GM12878 (cell line): ENCODE measurements at regions of chr3 and their contacts with region 1.

Region 1: GRCh38 chr3:112734718-112735350 is 93.9 kb upstream of the CCDC80 start:
- DNase-seq: peak; percentile 40
- ATAC-seq: peak; percentile 94
- H3K4me3 ChIP-seq: no peak overlapping the region
- H3K27ac ChIP-seq: no peak overlapping the region
- H3K4me1 ChIP-seq: no peaks in the 10 kb centered on the region
- H3K27me3 ChIP-seq: no peaks in the 10 kb centered on the region; a peak in 1 of 4 replicates
- CTCF ChIP-seq: peak; percentile 71 to 84 (median 71)
- EP300 ChIP-seq: no peak
- POLR2A ChIP-seq: no peak
- RAD21 ChIP-seq: peak; percentile 91

Region 2: DNA sequence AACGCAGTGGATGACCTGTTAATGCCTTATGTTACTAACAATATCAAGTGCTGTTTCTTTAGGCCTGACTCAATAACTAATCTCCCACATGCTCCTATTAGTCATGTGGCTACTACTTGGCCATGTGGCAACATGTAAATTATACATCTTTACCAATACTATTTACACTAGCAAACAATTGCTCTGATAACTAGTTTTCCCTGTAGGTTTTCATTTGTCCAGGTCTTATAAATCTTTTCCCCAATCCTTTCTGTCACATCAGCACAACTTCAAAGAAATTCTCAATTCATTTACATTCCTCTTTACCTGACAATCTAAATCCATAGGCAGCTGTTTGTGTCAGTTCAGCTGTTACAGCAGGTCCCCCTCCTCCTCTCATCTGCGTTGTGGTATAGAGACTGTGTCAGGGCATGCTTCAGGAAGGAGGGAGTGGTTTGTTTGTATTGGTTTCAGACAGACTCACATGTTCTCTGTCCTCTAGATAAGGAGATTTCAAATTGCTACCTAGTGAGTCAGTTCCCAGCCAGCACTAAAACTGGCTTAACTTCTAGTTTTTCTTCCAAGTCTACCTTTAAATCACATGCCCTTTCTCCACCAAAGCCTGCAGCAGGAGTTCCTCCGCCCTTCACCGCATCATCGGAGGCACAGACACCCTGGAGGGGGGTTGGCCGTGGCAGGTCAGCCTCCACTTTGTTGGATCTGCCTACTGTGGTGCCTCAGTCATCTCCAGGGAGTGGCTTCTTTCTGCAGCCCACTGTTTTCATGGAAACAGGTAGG is 659.9 kb before region 1 on chr3:
- CTCF ChIA-PET with region 1: no interaction called
- POLR2A ChIA-PET with region 1: no interaction called
- RAD21 ChIA-PET with region 1: no interaction called
- SMC1A ChIA-PET with region 1: no interaction called
- in situ Hi-C with region 1: no loop called
- intact Hi-C with region 1: no loop called
- DNase-seq: no peak
- ATAC-seq: peak; percentile 70
- H3K4me3 ChIP-seq: no peak overlapping the region
- H3K27ac ChIP-seq: no peak overlapping the region
- H3K4me1 ChIP-seq: peaks cover 4% of the 10 kb centered on the region; the same call in 1 of the 2 replicates
- H3K27me3 ChIP-seq: no peaks in the 10 kb centered on the region
- CTCF ChIP-seq: no peak
- EP300 ChIP-seq: no peak
- POLR2A ChIP-seq: no peak
- RAD21 ChIP-seq: no peak

Region 3: DNA sequence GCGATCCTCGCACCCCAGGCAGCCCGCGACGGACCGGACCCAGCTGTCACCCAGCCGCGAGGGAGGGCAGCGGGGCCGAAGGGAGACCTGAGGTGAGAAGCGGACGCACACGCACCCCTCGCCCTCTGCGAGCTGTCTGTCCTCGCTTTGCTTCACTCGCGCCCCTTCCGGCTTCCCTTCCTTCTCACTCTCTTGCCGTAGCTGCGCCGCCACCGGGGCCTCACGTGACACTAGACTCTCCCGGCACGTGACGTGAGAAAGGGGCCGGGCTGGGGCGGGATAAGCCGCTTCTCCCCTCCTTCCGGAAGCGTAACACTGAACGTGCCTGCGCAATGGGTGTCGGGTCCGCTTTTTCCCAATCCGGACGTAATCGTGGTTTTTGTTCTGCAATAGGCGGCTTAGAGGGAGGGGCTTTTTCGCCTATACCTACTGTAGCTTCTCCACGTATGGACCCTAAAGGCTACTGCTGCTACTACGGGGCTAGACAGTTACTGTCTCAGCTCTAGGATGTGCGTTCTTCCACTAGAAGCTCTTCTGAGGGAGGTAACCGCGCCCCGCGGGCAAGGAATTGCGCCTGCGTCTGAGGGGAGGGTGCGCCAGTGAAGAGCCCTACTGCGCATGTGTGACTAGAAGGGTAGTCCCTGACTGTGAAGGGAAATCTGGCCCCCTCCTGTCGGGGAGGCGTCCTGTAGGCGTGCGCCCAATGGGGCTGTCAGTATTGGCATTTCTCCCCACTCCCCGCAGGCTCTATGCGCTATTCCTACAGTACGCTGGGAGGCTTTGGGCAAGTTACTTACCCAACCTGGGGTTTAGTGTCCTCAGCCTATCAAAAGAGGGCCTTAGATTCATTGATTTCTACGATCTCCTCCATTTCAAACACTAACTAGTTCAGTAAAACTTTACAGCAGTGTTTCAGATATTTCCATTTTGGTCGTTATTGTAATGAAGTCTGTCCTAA is 172.8 kb before region 1 on chr3 and contains the starts of genes ATG3 and SLC35A5:
- CTCF ChIA-PET with region 1: no interaction called
- POLR2A ChIA-PET with region 1: no interaction called
- RAD21 ChIA-PET with region 1: no interaction called
- SMC1A ChIA-PET with region 1: no interaction called
- in situ Hi-C with region 1: no loop called
- intact Hi-C with region 1: no loop called
- DNase-seq: peak; percentile 96
- ATAC-seq: peak; percentile 88
- H3K4me3 ChIP-seq: peak within 1 kb of the TSS; percentile 81
- H3K27ac ChIP-seq: peak within 1 kb of the TSS; percentile 92
- H3K4me1 ChIP-seq: peaks cover 4% of the 10 kb centered on the region; the same call in 1 of the 2 replicates
- H3K27me3 ChIP-seq: no peaks in the 10 kb centered on the region
- CTCF ChIP-seq: 0 out of 6 replicates have a peak, but pooled peaks of 2 of the 3 experiments have one; percentile 0 to 9
- EP300 ChIP-seq: peak; percentile 42 to 57; a peak in 1 of 4 replicates
- POLR2A ChIP-seq: peak; percentile 89
- RAD21 ChIP-seq: no peak
- polyA plus RNA-seq, gene ATG3: 49.8 to 71.2 TPM
- polyA plus RNA-seq, gene SLC35A5: 10.9 to 15.7 TPM

Region 4: GRCh38 chr3:112642912-112643506 is 91.8 kb before region 1 on chr3:
- CTCF ChIA-PET with region 1: interaction called, 33 read pairs
- POLR2A ChIA-PET with region 1: no interaction called
- RAD21 ChIA-PET with region 1: interaction called, 33 read pairs
- SMC1A ChIA-PET with region 1: interaction called, 55 read pairs
- in situ Hi-C with region 1: no loop called
- intact Hi-C with region 1: loop called (anchors 2 kb)
- DNase-seq: peak; percentile 46
- ATAC-seq: peak; percentile 99
- H3K4me3 ChIP-seq: no peak overlapping the region
- H3K27ac ChIP-seq: no peak overlapping the region
- H3K4me1 ChIP-seq: peaks cover 15% of the 10 kb centered on the region
- H3K27me3 ChIP-seq: peaks cover 0 to 8% of the 10 kb centered on the region in 2 experiments; a peak in 3 of 4 replicates
- CTCF ChIP-seq: peak; percentile 86 to 96 (median 93)
- EP300 ChIP-seq: no peak
- POLR2A ChIP-seq: no peak
- RAD21 ChIP-seq: peak; percentile 85

Region 5: GRCh38 chr3:112814266-112814665 is 79.4 kb after region 1 on chr3:
- CTCF ChIA-PET with region 1: interaction called, 30 read pairs
- POLR2A ChIA-PET with region 1: no interaction called
- RAD21 ChIA-PET with region 1: interaction called, 10 read pairs
- SMC1A ChIA-PET with region 1: interaction called, 12 read pairs
- in situ Hi-C with region 1: no loop called
- intact Hi-C with region 1: loop called (anchors 5 kb)
- DNase-seq: no peak
- ATAC-seq: peak; percentile 29; the same call in 1 of the 3 replicates
- H3K4me3 ChIP-seq: no peak overlapping the region
- H3K27ac ChIP-seq: no peak overlapping the region
- H3K4me1 ChIP-seq: peaks cover 19% of the 10 kb centered on the region
- H3K27me3 ChIP-seq: no peaks in the 10 kb centered on the region
- CTCF ChIP-seq: peak; percentile 1 to 12 (median 10); a peak in 1 of 6 replicates
- EP300 ChIP-seq: no peak
- POLR2A ChIP-seq: no peak
- RAD21 ChIP-seq: peak; percentile 40

Region 6: DNA sequence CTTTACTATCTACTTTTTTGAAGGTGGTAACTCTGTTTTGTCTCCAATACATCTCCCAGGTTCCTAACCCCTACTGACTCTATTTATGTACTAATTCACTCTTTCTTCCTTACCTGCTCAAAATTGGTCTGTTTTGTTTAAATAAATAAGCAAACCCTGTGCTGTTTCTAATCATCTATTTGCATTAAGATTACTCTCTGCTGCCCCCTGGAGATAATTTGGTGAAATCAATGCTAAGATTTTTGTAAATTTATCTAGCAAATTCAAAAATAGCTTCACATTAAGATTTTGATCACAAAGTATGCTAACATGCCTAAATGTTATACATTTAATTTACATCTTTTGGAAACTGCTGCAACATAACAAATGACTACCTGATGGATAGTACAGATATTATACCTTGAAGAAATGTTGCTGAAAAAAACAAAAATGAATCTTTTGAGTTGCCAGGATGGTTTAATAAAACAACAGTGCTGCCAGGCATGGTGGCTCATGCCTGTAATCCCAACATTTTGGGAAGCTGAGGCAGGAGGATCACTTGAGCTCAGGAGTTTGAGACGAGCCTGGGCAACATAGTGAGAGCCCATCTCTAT is 244.5 kb after region 1 on chr3:
- CTCF ChIA-PET with region 1: interaction called, 165 read pairs
- POLR2A ChIA-PET with region 1: no interaction called
- RAD21 ChIA-PET with region 1: interaction called, 99 read pairs
- SMC1A ChIA-PET with region 1: interaction called, 174 read pairs
- in situ Hi-C with region 1: loop called (anchors 5 kb)
- intact Hi-C with region 1: loop called (anchors 1 kb)
- DNase-seq: no peak
- ATAC-seq: peak; percentile 51
- H3K4me3 ChIP-seq: no peak overlapping the region
- H3K27ac ChIP-seq: no peak overlapping the region
- H3K4me1 ChIP-seq: peaks cover 25% of the 10 kb centered on the region
- H3K27me3 ChIP-seq: no peaks in the 10 kb centered on the region
- CTCF ChIP-seq: peak; percentile 35 to 62 (median 49); a peak in 4 of 6 replicates
- EP300 ChIP-seq: no peak
- POLR2A ChIP-seq: no peak
- RAD21 ChIP-seq: peak; percentile 74

Region 7: DNA sequence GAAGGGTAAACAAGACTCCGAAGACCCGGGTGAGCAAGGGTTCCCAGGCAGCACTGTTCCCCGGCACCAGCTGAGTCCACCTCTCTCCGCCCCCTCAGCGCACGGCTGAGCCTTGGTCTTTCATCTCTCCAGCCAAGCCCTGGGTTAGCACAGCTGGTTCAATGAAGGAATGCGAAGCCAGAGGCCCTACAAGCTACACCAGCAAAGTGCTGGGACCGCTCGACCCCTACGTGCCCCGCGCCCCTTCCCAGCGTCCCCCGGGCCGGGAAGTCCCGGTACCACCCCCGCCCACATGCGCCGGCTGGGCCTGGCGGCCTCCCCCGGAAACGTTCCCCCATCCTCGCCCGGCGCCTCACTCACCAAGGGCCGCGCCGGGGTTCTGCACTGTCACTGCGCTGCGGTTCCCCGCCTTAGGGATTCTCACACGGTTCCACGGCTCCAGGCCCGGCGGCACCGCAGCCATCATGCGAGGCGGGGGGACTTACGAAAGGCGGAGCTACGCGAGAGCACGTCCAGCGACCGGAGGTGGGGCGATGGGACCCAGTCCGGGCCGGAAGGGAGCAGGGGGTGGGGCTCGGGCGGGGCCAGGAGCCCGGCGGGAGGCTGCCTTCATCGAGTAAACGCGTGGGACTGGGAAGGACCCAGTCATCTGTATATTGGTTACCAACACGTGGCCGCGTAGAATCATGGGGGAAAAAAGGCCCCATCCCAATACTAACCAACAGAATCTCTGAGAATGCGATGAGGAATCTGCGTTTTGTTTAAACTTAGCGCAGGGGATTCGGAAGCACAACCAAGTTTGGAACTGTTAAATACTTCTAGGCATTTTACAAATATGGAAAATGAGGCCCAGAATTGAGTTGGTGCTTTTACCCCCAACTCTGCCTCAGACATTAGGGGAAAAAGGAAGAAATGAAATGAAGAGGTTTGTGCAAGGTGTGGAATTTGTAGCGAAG is 284.6 kb after region 1 on chr3:
- CTCF ChIA-PET with region 1: interaction called, 16 read pairs
- POLR2A ChIA-PET with region 1: no interaction called
- RAD21 ChIA-PET with region 1: interaction called, 14 read pairs
- SMC1A ChIA-PET with region 1: interaction called, 5 read pairs
- in situ Hi-C with region 1: no loop called
- intact Hi-C with region 1: no loop called
- DNase-seq: peak; percentile 67
- ATAC-seq: peak; percentile 94
- H3K4me3 ChIP-seq: peak overlapping the region; percentile 93
- H3K27ac ChIP-seq: peak overlapping the region; percentile 86
- H3K4me1 ChIP-seq: peaks cover 4% of the 10 kb centered on the region; the same call in 1 of the 2 replicates
- H3K27me3 ChIP-seq: no peaks in the 10 kb centered on the region
- CTCF ChIP-seq: no peak
- EP300 ChIP-seq: peak in 1 of 2 experiments; percentile 11; a peak in 1 of 4 replicates
- POLR2A ChIP-seq: peak; percentile 93
- RAD21 ChIP-seq: no peak